Heart right ventricle (tissue), 16 donors: ENCODE measurements at regions of chr10 and their contacts with region 1.

Region 1: DNA sequence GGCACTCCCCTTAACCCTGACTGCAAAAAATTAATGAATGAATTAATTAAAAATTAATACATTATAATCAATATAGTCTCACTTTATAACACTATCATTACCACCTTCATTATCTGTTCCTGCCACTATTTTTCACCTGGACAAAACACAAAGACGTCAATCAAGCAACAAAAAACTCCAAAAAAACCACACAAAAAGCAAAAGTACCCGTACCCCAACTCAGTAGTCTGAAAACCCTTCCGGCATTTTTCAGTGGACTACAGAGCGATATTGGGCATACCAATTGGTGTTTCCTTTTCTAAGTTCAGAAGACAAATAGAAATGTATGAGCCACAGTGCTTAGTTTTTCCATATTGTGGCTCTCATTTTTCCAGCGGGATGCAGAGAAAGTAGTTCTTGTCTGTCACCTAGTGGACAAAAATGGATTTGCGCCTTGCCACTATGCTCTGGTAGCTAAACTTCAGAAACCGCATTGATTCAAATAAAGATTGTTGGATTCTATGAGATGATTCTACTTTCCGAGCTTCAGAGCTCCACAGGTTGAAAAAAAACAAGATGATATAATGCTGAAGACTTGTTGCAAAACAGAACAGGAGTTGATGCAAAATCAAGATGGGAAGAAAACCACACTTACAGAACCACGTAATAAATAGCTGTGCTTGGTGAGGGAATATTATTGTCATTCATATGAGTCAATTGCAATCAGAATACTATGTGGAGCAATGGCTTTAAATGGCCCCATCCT is 50.6 kb upstream of the ITGB1 start:
- DNase-seq: peak in 1 of 2 donors; percentile 69
- ATAC-seq: peak in 5 of 8 donors; percentile 17 to 51 (median 44)
- H3K4me3 ChIP-seq: peak overlapping the region in 1 of 10 donors; percentile 9
- H3K27ac ChIP-seq: peak overlapping the region in 2 of 10 donors; percentile 9 to 67
- H3K4me1 ChIP-seq: peaks cover 4 to 54% (median 21%) of the 10 kb centered on the region in 9 donors
- H3K27me3 ChIP-seq: no peaks in the 10 kb centered on the region
- CTCF ChIP-seq: peak; percentile 97 to 100 (median 99)

Region 2: DNA sequence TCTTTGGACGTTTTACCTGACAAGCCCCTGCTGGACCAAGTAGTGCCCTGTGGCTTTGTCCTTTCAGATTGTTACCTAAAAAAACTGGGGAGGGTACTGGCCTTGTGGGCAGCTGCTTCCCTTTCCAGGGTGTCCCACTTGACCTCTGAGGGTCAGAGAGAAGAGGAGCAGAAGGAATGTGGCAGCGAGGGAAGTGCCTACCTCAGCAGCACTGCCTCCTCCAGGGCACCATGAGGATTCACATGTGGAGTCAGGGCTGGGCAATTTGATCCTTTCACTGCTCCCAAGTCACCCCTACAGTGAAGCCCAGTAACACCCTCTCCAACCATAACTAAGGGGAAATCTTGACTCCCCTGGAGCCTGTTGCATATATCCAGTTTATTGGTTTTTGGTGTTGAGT is 115.2 kb before region 1 on chr10:
- intact Hi-C with region 1: loop called in 1 of 10 experiments (anchors 10 kb)
- DNase-seq: no peak
- ATAC-seq: peak in 1 of 8 donors; percentile 48
- H3K4me3 ChIP-seq: no peak overlapping the region
- H3K27ac ChIP-seq: no peak overlapping the region
- H3K4me1 ChIP-seq: peaks cover 0 to 5% (median 0%) of the 10 kb centered on the region in 9 donors
- H3K27me3 ChIP-seq: no peaks in the 10 kb centered on the region
- CTCF ChIP-seq: no peak

Region 3: DNA sequence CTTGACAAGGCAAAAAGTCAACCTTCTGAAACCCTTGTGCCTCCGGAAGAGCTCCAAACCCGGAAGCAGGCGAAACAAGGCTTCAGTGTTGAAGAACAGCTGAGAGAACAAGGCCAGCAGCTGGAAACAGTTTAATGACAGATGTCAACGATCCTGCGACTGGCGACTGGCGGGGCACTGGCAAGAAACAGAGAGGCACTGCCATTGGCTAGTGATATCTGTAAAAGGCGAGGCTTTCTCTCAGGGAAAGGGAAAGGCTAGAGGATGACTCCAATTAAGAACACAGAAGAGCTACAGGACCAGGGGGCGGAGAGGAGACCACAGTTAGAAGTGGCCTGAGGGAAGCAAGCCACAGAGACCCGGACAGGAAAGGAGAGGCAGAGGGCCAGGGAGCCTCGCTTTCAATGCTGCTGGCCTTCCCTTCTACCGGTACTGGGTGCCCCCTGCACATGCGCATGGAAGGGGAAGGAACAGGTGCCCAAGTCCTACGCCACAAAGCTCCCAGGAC is 70.1 kb before region 1 on chr10:
- intact Hi-C with region 1: loop called in 2 of 10 experiments (anchors 5 kb)
- DNase-seq: peak; percentile 28 to 44
- ATAC-seq: peak; percentile 42 to 70 (median 61)
- H3K4me3 ChIP-seq: peak overlapping the region in 7 of 10 donors; percentile 4 to 31 (median 22)
- H3K27ac ChIP-seq: peak overlapping the region; percentile 11 to 86 (median 69)
- H3K4me1 ChIP-seq: peaks cover 25 to 95% (median 77%) of the 10 kb centered on the region in 9 donors
- H3K27me3 ChIP-seq: no peaks in the 10 kb centered on the region
- CTCF ChIP-seq: no peak

Region 4: DNA sequence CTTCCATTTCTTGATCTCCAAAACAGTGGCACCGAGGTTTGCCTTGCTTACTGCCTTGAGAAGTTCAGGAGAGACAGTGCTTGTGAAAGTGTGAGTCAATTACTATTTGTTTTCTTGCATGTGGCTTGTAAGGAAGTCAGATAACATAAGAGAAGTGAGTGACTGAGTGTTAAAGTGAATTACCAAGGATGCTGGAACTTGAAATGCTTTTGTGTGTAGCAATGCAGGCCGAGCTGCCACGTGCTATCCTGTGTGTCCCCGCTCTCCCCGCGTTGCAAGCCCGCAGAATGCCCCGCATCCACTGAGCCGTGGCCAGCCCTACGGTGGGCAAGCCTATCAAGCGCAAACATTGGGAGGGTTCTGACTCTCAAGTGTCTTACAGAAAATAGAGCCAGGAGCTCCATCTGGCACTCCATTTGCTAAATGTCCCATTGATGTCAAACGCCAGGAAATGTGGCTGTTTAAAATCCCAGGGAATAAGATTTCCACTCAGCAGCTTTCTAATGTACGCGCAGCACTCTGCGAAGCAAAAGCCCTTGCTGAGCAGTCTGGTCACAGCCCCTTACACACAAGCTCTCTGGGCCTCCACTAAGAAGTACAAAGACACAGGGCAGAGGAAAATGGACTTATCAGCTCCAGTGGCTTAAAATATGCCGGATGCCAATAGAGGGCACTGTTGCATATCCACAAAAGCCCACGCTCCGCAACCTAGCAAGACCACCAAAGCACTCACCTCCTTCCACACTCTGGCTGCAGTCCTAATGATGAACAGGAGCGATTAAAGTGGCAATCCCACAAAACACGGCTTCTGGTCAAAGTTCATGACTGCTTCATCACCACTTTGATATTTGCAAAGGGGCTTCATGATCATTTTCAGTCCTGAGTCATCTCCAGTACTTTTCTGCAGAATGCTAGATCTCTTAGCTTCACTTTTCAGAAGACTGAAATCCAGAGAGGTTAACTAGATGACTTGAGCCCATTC is 107.4 kb after region 1 on chr10:
- intact Hi-C with region 1: loop called in 2 of 10 experiments (anchors 10 kb)
- DNase-seq: peak in 1 of 2 donors; percentile 54
- ATAC-seq: peak in 5 of 8 donors; percentile 47 to 64 (median 54)
- H3K4me3 ChIP-seq: no peak overlapping the region
- H3K27ac ChIP-seq: peak overlapping the region in 5 of 10 donors; percentile 8 to 76 (median 21)
- H3K4me1 ChIP-seq: peaks cover 0 to 66% (median 35%) of the 10 kb centered on the region in 9 donors
- H3K27me3 ChIP-seq: no peaks in the 10 kb centered on the region
- CTCF ChIP-seq: peak; percentile 38 to 69 (median 60)